ENCODE measurements at regions of chr17 and their contacts with region 1.

Region 1: DNA sequence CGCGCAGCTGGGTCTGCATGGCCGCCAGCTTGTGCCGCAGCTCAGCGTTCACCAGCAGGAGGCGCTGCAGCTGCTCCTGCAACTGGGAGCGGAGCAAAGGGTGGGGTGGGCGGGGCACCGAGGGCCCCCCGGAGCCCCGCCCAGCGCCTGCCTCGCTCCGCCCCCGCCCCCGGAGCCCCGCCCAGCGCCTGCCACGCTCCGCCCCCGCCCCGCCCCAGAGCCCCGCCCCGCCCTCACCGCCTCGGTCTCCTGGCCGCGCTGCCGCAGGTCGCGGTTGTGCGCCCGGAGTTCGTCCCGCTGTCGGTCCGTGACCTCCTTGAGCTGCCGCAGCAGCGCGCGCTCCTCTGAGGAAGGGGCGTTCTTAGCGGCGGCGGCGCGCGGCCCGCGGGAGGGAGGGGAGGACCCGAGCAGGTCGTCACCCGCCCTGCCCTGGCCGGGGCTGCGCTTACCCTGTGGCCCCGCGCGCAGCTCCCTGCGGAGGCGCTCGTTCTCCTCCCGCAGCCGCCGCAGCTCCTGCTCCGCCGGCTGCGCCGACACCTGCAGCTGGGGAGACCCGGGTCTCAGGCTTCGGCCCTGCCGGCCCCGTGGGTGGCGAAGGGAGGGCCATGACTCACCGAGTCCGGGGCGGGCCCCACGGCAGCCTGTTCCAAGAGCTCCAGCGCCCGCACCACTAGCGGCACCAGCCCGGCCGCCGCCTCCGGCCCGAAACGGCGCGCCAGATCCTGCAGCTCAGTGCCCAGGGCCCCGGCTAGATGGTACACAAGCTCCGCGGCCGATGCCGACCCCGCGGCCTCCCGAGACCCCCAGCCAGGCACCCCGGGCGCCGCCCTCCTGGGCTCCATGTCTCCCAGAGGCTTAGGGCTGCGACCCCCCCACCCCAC is 463 bp downstream of the RILP start:
- DNase-seq: peak; percentile 79 to 98
- H3K4me3 ChIP-seq: peak overlapping the region; percentile 79
- H3K27ac ChIP-seq: peak overlapping the region; percentile 75
- H3K4me1 ChIP-seq: peaks cover 31% of the 10 kb centered on the region
- H3K27me3 ChIP-seq: no peaks in the 10 kb centered on the region
- CTCF ChIP-seq: no peak; the same call in none of the 2 replicates

Region 2: DNA sequence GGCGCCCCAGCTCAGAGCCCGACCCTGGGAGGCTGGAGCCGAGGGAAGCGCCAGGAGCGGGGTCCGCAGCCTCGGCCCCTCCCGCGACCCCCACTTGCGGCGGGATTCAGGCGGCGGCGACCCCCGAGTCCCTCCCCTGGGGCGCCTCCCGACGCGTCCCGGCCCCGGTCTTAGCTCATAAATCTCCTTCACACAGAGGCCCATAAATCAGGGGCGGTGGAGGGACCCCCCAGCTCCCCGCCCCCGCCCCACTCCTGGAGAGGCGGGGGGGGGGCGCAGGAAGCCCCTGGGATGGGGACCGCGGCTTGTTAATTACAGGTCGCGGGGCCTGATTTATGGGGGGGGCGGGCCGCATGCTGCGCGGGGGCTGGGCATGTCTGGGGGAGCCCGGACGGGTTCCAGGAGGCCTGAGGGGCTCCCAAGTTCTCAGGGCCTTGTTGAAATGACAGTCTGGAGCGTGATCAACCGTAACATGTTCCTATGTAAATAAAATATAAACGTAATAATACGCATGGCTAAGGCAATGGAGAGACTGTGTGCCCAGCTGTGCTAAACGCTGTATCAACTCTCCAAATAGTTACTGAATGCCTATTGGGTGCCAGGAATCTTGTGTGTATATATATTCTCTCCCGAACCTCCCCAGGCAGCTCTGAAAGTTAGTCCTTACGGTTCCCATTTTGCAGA is 389.0 kb before region 1 on chr17:
- CTCF ChIA-PET with region 1: no interaction called
- POLR2A ChIA-PET with region 1: no interaction called
- intact Hi-C with region 1: loop called (anchors 5 kb)
- DNase-seq: no peak
- H3K4me3 ChIP-seq: peak overlapping the region; percentile 58; the same call in 1 of the 2 replicates
- H3K27ac ChIP-seq: no peak overlapping the region
- H3K4me1 ChIP-seq: peaks cover 10% of the 10 kb centered on the region; the same call in 1 of the 2 replicates
- H3K27me3 ChIP-seq: peaks cover 5% of the 10 kb centered on the region; the same call in 1 of the 2 replicates
- CTCF ChIP-seq: no peak

Region 3: GRCh38 chr17:1488030-1488863 is 161.0 kb before region 1 on chr17:
- CTCF ChIA-PET with region 1: no interaction called
- POLR2A ChIA-PET with region 1: no interaction called
- intact Hi-C with region 1: loop called (anchors 5 kb)
- DNase-seq: peak; percentile 60 to 97
- H3K4me3 ChIP-seq: peak overlapping the region; percentile 56
- H3K27ac ChIP-seq: peak overlapping the region; percentile 45
- H3K4me1 ChIP-seq: peaks cover 58% of the 10 kb centered on the region
- H3K27me3 ChIP-seq: no peaks in the 10 kb centered on the region
- CTCF ChIP-seq: no peak

Region 4: GRCh38 chr17:1783834-1784611 is 134.8 kb after region 1 on chr17:
- CTCF ChIA-PET with region 1: no interaction called
- POLR2A ChIA-PET with region 1: interaction called, 12 read pairs
- intact Hi-C with region 1: no loop called
- DNase-seq: no peak
- H3K4me3 ChIP-seq: no peak overlapping the region
- H3K27ac ChIP-seq: no peak overlapping the region
- H3K4me1 ChIP-seq: peaks cover 10% of the 10 kb centered on the region
- H3K27me3 ChIP-seq: no peaks in the 10 kb centered on the region
- CTCF ChIP-seq: peak; percentile 79

Region 5: DNA sequence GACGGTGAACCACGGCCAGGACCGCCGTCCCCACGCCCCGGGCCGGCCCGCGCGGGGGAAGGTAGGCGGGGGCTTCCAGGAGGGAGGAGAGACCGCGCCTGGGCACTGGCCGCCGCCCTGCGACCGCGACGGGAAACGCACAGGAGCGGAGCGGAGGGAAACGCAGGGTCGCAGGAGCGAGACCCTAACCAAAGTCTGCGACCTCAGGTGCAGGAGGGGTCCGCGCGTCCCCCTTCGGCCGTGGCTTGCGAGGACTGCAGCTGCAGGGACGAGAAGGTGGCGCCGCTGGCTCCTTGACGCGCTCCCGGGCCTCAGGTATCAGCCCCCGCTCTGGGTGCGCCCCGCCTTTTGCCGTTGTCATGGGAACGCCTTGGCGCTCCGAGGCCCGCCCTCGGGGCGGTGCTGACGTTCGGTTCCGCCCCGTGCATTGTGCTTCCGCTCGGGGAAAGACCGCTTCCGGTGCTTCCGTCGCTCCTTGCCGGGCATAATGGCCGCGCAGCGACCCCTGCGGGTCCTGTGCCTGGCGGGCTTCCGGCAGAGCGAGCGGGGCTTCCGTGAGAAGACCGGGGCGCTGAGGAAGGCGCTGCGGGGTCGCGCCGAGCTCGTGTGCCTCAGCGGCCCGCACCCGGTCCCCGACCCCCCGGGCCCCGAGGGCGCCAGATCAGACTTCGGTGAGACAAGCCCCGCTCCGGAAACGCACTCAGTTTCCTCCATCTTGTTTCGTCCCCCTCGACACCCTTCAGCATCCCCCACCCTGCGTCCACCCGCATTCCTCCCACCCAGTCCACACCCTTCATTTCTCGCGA is 392.6 kb after region 1 on chr17 and contains the start of gene OVCA2:
- CTCF ChIA-PET with region 1: no interaction called
- POLR2A ChIA-PET with region 1: no interaction called
- intact Hi-C with region 1: loop called (anchors 2 kb)
- DNase-seq: peak; percentile 82 to 98
- H3K4me3 ChIP-seq: peak within 1 kb of the TSS; percentile 93
- H3K27ac ChIP-seq: peak within 1 kb of the TSS; percentile 73
- H3K4me1 ChIP-seq: peaks cover 35% of the 10 kb centered on the region
- H3K27me3 ChIP-seq: no peaks in the 10 kb centered on the region
- CTCF ChIP-seq: peak; percentile 49
- total RNA-seq, gene OVCA2: 34.4 and 35.4 TPM in 2 replicates

Measured in PC-9 (cell line).